CD8-positive, alpha-beta T cell (primary cell): ENCODE measurements at regions of chr6 and their contacts with region 1.

Region 1: DNA sequence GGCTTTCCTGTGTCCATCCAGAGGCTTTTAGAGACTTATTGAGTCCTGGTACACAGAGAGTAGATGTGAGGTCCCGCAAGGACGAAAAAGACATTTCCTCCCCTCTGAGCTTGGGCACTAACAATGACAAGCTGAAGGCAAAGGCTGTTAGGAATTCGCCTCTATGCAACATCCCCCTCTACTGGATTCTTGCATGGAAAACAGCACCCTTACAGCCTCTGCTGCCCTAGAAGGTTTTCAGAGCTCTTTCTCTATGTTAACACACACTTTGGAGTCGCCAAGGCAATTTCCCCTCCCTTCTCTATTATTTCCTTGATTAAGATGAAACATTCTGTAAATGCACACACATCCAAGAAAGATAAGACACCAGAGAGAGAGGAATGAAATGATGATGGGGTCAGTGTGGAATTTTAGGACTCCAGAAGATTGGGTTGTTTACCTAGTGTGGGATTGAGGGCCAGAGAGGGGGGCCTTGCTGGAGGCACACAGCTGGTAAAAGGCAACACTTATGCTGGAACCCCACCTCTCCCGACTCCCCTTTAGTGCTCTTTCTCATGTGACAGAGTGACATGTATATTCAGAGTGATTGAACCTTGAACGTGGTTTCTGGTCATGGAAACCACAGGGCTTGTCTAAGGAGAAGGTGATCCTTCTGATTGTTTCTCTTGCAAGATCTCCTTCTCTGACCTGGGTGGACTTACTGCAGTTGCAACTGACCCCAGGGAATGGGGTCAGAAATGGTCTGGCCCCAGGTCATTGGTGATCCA is 300.7 kb downstream of the CLIC5 start:
- DNase-seq: peak; percentile 12 to 81 (median 48)
- ATAC-seq: peak; percentile 83
- H3K4me3 ChIP-seq: no peak overlapping the region
- H3K4me3 Mint-ChIP-seq: no peak overlapping the region
- H3K27ac ChIP-seq: no peak overlapping the region
- H3K27ac Mint-ChIP-seq: no peak overlapping the region
- H3K4me1 ChIP-seq: peaks cover 5% of the 10 kb centered on the region
- H3K4me1 Mint-ChIP-seq: peaks cover 12% of the 10 kb centered on the region
- H3K27me3 ChIP-seq: no peaks in the 10 kb centered on the region
- H3K27me3 Mint-ChIP-seq: no peaks in the 10 kb centered on the region
- CTCF ChIP-seq: peak; percentile 72

Region 2: DNA sequence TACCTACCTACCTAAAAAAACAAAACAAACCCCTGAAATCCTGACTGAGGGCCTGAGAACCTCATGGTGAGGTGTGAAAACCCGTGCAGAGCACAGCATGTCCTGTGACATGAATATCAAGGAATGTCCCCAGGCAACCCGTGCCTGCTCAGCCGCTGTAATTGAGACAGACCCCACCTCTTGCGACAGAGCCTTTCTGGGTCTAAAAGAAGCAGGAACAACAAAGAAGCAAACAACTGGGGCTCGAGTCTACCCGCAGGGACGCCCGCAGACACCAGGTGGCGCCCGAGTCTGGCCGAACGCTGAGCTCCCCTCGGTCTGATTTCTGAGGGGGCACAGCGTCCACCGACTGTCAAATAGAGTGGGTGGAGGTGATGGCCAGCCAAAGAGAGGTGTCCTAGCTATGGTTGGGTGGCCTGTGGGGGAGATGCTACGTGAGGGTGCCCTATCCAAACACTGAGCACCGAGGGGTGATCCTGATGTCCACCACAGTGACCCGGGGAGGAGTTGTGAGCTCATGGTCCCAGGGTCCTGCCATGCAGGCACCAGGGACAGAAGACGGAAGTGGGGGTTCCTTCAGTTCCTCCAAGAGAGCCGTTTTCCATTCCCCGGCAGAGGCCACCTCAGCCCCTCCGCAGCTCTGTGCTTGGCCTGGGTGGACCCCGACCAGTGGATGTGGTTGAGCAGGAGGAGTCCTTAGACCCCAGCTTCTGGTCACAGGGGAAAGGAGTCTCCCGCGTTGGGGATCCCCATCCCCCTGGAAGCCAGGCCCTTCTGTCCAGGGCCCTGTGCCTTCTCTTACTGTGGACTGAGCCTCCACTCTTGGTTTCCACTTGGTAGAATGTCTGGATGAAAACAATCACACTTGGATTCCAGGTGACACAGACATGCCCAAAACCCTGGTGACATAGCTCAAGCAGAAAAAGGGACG is 1059.2 kb before region 1 on chr6:
- CTCF ChIA-PET with region 1: interaction called, 119 read pairs
- POLR2A ChIA-PET with region 1: interaction called, 6 read pairs
- intact Hi-C with region 1: loop called (anchors 1 kb)
- DNase-seq: peak; percentile 53 to 88 (median 77)
- ATAC-seq: peak; percentile 78
- H3K4me3 ChIP-seq: no peak overlapping the region
- H3K4me3 Mint-ChIP-seq: peak overlapping the region; percentile 20
- H3K27ac ChIP-seq: no peak overlapping the region
- H3K27ac Mint-ChIP-seq: peak overlapping the region; percentile 14
- H3K4me1 ChIP-seq: peaks cover 10% of the 10 kb centered on the region
- H3K4me1 Mint-ChIP-seq: peaks cover 7% of the 10 kb centered on the region
- H3K27me3 ChIP-seq: no peaks in the 10 kb centered on the region
- H3K27me3 Mint-ChIP-seq: peaks cover 5% of the 10 kb centered on the region
- CTCF ChIP-seq: peak; percentile 93

Region 3: DNA sequence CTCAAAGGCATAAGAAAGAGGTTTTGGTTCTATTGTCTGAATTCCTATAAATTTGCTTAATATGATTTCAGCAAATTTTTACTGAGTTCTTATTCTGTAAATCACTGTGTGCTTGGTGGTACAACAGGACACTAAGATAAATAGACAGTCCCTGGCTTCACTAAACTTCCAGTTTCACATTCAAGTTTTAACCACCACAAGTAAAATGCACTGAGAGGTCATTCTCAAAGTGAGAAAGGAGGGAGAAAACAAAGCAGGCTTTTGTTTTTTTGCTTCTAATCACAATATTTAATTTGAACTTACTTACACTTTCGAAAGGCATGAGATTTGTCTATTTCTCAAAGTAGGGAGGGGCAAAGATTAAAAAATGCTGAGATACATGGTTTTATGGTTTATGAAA is 881.7 kb before region 1 on chr6:
- CTCF ChIA-PET with region 1: interaction called, 3 read pairs
- POLR2A ChIA-PET with region 1: no interaction called
- intact Hi-C with region 1: loop called in 1 of 2 experiments (anchors 10 kb)
- DNase-seq: no peak
- ATAC-seq: no peak
- H3K4me3 ChIP-seq: no peak overlapping the region
- H3K4me3 Mint-ChIP-seq: no peak overlapping the region
- H3K27ac ChIP-seq: no peak overlapping the region
- H3K27ac Mint-ChIP-seq: no peak overlapping the region
- H3K4me1 ChIP-seq: peaks cover 20% of the 10 kb centered on the region
- H3K4me1 Mint-ChIP-seq: peaks cover 44% of the 10 kb centered on the region
- H3K27me3 ChIP-seq: no peaks in the 10 kb centered on the region
- H3K27me3 Mint-ChIP-seq: no peaks in the 10 kb centered on the region
- CTCF ChIP-seq: no peak

Region 4: GRCh38 chr6:45256697-45257695 is 457.9 kb before region 1 on chr6:
- CTCF ChIA-PET with region 1: no interaction called
- POLR2A ChIA-PET with region 1: no interaction called
- intact Hi-C with region 1: no loop called
- DNase-seq: no peak
- ATAC-seq: no peak
- H3K4me3 ChIP-seq: no peak overlapping the region
- H3K4me3 Mint-ChIP-seq: no peak overlapping the region
- H3K27ac ChIP-seq: no peak overlapping the region
- H3K27ac Mint-ChIP-seq: no peak overlapping the region
- H3K4me1 ChIP-seq: no peaks in the 10 kb centered on the region
- H3K4me1 Mint-ChIP-seq: peaks cover 9% of the 10 kb centered on the region
- H3K27me3 ChIP-seq: no peaks in the 10 kb centered on the region
- H3K27me3 Mint-ChIP-seq: no peaks in the 10 kb centered on the region
- CTCF ChIP-seq: no peak

Region 5: GRCh38 chr6:45377554-45378333 is 337.2 kb before region 1 on chr6 and contains the start of gene SUPT3H:
- CTCF ChIA-PET with region 1: interaction called, 10 read pairs
- POLR2A ChIA-PET with region 1: interaction called, 4 read pairs
- intact Hi-C with region 1: loop called in 1 of 2 experiments (anchors 5 kb)
- DNase-seq: peak; percentile 79 to 98 (median 91)
- ATAC-seq: peak; percentile 79
- H3K4me3 ChIP-seq: peak within 1 kb of the TSS; percentile 73 to 90
- H3K4me3 Mint-ChIP-seq: peak within 1 kb of the TSS; percentile 96
- H3K27ac ChIP-seq: peak within 1 kb of the TSS; percentile 83 to 95
- H3K27ac Mint-ChIP-seq: peak within 1 kb of the TSS; percentile 99
- H3K4me1 ChIP-seq: peaks cover 8% of the 10 kb centered on the region
- H3K4me1 Mint-ChIP-seq: peaks cover 29% of the 10 kb centered on the region
- H3K27me3 ChIP-seq: no peaks in the 10 kb centered on the region
- H3K27me3 Mint-ChIP-seq: no peaks in the 10 kb centered on the region
- CTCF ChIP-seq: no peak
- total RNA-seq, gene SUPT3H: 9.4 to 10.7 TPM

Region 6: GRCh38 chr6:45586216-45587171 is 128.4 kb before region 1 on chr6:
- CTCF ChIA-PET with region 1: interaction called, 6 read pairs
- POLR2A ChIA-PET with region 1: interaction called, 4 read pairs
- intact Hi-C with region 1: loop called in 1 of 2 experiments (anchors 1 kb)
- DNase-seq: peak; percentile 22 to 90 (median 68)
- ATAC-seq: peak; percentile 82
- H3K4me3 ChIP-seq: peak overlapping the region; percentile 6 to 13
- H3K4me3 Mint-ChIP-seq: peak overlapping the region; percentile 83
- H3K27ac ChIP-seq: peak overlapping the region in 1 of 2 experiments; percentile 6
- H3K27ac Mint-ChIP-seq: peak overlapping the region; percentile 92
- H3K4me1 ChIP-seq: peaks cover 56% of the 10 kb centered on the region
- H3K4me1 Mint-ChIP-seq: peaks cover 63% of the 10 kb centered on the region
- H3K27me3 ChIP-seq: no peaks in the 10 kb centered on the region
- H3K27me3 Mint-ChIP-seq: no peaks in the 10 kb centered on the region
- CTCF ChIP-seq: no peak

Region 7: DNA sequence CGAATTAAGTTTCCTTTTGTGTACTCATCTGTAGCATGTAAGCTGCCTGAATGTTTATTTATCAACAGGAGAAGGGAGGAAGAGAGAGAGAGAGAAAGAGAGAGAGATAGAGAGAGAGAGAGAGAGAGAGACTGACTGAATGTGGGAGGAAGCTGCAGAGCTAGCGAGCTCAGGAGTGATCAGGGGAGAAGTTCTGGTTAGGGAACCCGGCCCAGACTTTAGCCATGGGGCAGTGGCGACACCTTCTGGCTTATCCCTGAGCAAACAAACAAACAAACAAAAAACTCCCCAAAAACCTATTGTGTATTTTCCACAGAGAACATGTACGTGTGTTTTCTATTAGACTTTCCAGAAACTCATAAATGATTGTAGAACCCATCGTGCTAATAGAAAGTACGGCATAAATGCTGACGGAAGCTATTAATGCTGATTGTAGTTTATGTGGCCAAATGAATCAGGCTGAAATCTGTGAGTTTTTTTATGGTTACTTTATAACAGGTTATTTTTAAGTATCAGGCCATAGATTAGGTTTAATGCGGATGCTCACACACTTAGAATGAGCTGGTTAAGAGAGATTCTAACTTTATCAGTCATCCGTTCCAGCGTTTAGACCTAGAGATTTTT is 207.9 kb after region 1 on chr6:
- CTCF ChIA-PET with region 1: interaction called, 4 read pairs
- POLR2A ChIA-PET with region 1: no interaction called
- intact Hi-C with region 1: loop called in 1 of 2 experiments (anchors 5 kb)
- DNase-seq: peak; percentile 22 to 70 (median 51)
- ATAC-seq: no peak
- H3K4me3 ChIP-seq: no peak overlapping the region
- H3K4me3 Mint-ChIP-seq: no peak overlapping the region
- H3K27ac ChIP-seq: no peak overlapping the region
- H3K27ac Mint-ChIP-seq: no peak overlapping the region
- H3K4me1 ChIP-seq: no peaks in the 10 kb centered on the region
- H3K4me1 Mint-ChIP-seq: peaks cover 4% of the 10 kb centered on the region
- H3K27me3 ChIP-seq: no peaks in the 10 kb centered on the region
- H3K27me3 Mint-ChIP-seq: no peaks in the 10 kb centered on the region
- CTCF ChIP-seq: peak; percentile 38